Caco-2 (cell line): ENCODE measurements at regions of chr22 and their contacts with region 1.

Region 1: DNA sequence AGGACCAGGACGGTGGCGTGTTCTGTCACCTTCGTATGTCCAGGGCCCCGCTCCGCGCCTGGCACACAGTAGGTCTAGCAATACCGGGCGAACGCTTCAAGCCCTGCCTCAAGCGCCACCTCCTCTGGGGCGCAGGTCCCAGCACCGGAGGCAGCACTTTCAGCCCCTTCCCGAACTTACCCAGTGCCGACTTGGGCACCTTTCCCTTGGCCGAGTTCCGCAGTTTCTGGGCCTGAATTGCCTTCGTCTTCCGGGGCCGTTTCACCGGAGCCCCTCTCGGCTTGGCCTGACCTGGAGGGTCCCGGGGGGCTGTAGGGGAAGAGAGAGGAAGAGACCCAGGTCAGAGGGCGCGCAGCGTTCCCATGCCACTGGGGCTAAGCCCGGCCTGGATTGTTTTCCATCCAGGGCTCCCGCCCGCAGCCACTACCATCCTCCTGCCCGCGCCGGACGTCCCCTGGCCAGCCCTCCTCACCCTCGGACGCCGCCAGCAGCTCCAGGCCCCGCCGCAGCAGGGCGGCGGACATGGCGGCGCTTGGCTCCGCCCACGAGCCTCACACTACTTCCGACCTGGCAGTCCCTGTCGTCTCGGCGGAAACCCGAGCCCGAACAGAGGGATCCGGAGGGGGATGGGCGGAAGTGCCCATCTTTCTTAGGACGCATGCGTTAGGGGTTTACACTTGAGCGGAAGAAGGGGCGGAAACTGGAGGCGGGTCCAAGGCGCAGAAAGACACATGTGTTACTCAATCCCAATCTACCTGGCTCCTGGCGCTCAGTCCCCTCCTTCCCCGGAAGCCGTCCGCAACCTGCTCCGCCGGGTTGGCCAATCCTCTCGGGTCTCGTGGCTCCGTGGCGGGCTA is at the start of gene RPS19BP1:
- DNase-seq: peak; percentile 99
- H3K4me3 ChIP-seq: peak within 1 kb of the TSS; percentile 93
- H3K4me3 Mint-ChIP-seq: peak within 1 kb of the TSS; percentile 94
- H3K27ac Mint-ChIP-seq: peak within 1 kb of the TSS; percentile 94
- H3K4me1 ChIP-seq: peaks cover 36% of the 10 kb centered on the region
- H3K4me1 Mint-ChIP-seq: peaks cover 34% of the 10 kb centered on the region
- H3K27me3 ChIP-seq: no peaks in the 10 kb centered on the region
- H3K27me3 Mint-ChIP-seq: no peaks in the 10 kb centered on the region
- CTCF ChIP-seq: no peak
- total RNA-seq, gene RPS19BP1: 85.8 and 88.0 TPM in 2 replicates

Region 2: DNA sequence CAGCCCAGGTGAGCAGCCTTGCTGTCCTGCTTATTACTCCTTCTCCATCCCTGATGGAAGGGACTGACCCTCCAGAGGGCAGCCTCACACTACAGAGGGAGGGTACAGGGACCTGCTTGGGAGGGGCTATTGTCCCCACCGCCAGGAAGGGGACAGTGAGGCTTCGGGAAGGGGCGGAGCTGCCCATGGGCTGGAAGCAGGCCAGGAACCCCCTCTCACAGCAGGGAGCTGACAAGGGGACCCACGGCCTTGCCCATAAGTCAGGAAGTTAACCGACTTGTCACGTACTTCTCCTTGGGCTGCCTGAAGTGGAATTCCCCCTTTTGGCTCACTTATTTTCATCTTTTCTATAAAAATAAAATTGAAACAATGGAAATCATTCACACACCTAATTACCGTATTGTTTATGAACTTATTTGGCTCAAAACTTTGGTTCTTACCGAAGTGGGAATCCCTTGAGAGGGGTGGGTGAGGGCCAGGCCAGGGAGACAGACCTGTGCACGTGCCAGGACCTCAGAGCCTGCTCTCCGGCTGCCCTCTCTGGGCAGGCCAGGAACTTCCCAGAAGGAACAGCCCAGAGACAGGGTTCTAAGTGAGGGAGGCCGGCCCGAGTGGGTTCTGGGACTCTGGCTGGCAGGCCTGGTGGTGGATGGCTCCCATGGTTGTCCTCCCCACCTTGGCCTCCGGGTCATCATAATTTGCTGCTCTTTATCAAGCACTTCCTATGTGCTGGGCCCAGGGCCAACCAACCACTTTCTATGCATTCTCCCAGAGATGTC is 69.8 kb before region 1 on chr22:
- CTCF ChIA-PET with region 1: interaction called, 10 read pairs
- POLR2A ChIA-PET with region 1: no interaction called
- intact Hi-C with region 1: loop called (anchors 1 kb)
- DNase-seq: peak; percentile 71 to 73
- H3K4me3 ChIP-seq: no peak overlapping the region
- H3K4me3 Mint-ChIP-seq: no peak overlapping the region
- H3K27ac Mint-ChIP-seq: no peak overlapping the region
- H3K4me1 ChIP-seq: peaks cover 21% of the 10 kb centered on the region
- H3K4me1 Mint-ChIP-seq: peaks cover 8% of the 10 kb centered on the region
- H3K27me3 ChIP-seq: no peaks in the 10 kb centered on the region
- H3K27me3 Mint-ChIP-seq: no peaks in the 10 kb centered on the region
- CTCF ChIP-seq: peak; percentile 29 to 65

Region 3: DNA sequence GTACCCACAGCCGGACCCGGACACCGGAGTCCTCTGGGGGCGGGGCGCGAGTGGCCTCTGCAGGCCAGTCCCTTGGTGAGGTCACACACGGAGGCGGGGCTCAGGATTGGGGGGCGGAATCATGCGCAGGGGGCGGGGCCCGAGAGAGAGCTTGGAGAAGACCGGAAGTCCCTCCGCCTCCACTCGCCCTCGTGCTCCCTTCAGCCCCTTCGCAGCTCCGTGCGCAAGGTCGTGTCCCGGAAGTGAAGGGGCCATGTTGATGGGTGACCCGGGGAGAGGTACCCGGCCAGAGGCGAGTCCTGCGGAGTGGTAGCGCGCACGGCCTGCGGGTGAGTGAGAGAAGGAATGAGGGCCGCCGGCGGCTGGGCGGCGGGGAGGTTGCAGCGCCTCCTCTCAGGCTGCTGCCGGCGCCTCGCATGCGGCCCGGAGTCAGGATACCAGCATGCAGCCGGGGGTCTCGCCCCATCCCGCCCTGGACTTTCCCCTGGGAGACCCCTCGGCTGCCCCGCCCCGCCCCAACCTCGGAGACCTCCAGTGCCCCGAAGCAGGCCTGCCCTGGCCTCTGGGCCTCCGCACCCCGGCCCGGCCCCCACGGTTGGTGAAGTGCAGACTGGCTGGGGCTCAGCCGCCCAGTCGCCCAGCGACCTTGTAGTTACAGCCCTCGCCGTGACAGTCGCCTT is 30.2 kb before region 1 on chr22 and contains the start of gene MIEF1:
- CTCF ChIA-PET with region 1: interaction called, 13 read pairs
- POLR2A ChIA-PET with region 1: interaction called, 4 read pairs
- intact Hi-C with region 1: no loop called
- DNase-seq: peak; percentile 96 to 97
- H3K4me3 ChIP-seq: peak within 1 kb of the TSS; percentile 94
- H3K4me3 Mint-ChIP-seq: peak within 1 kb of the TSS; percentile 78
- H3K27ac Mint-ChIP-seq: peak within 1 kb of the TSS; percentile 62
- H3K4me1 ChIP-seq: peaks cover 6% of the 10 kb centered on the region
- H3K4me1 Mint-ChIP-seq: peaks cover 29% of the 10 kb centered on the region
- H3K27me3 ChIP-seq: no peaks in the 10 kb centered on the region
- H3K27me3 Mint-ChIP-seq: no peaks in the 10 kb centered on the region
- CTCF ChIP-seq: no peak
- total RNA-seq, gene MIEF1: 47.4 and 49.4 TPM in 2 replicates

Region 4: DNA sequence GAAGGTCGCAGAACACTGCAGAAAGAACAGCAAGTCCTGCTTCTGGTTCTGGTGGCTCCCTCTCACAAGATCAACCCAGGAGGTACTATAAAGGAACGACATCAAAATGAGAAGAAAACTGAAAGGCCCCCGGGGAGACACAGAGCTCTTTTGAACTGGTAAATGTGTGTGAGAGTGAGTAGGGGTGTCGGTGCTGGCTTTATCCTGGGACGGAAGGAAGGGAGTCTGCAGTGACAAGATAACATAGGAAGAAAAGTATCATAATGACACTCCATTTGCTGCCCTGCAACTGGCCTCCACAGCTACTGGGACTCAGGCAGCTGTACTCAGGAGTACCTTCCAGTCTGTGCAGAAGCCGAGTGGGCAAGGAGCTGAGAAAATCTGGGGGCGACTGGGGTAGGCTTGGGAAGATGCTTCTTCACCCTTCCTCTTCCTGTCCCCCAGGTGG is 300.2 kb after region 1 on chr22:
- CTCF ChIA-PET with region 1: no interaction called
- POLR2A ChIA-PET with region 1: no interaction called
- intact Hi-C with region 1: no loop called
- DNase-seq: no peak
- H3K4me3 ChIP-seq: no peak overlapping the region
- H3K4me3 Mint-ChIP-seq: no peak overlapping the region
- H3K27ac Mint-ChIP-seq: no peak overlapping the region
- H3K4me1 ChIP-seq: no peaks in the 10 kb centered on the region
- H3K4me1 Mint-ChIP-seq: no peaks in the 10 kb centered on the region
- H3K27me3 ChIP-seq: no peaks in the 10 kb centered on the region
- H3K27me3 Mint-ChIP-seq: peaks cover 27% of the 10 kb centered on the region
- CTCF ChIP-seq: no peak

Region 5: GRCh38 chr22:40024201-40025061 is 492.0 kb after region 1 on chr22:
- CTCF ChIA-PET with region 1: interaction called, 13 read pairs
- POLR2A ChIA-PET with region 1: no interaction called
- intact Hi-C with region 1: loop called (anchors 1 kb)
- DNase-seq: peak; percentile 61 to 79
- H3K4me3 ChIP-seq: no peak overlapping the region
- H3K4me3 Mint-ChIP-seq: no peak overlapping the region
- H3K27ac Mint-ChIP-seq: no peak overlapping the region
- H3K4me1 ChIP-seq: no peaks in the 10 kb centered on the region
- H3K4me1 Mint-ChIP-seq: no peaks in the 10 kb centered on the region
- H3K27me3 ChIP-seq: no peaks in the 10 kb centered on the region
- H3K27me3 Mint-ChIP-seq: no peaks in the 10 kb centered on the region
- CTCF ChIP-seq: peak; percentile 83 to 95